ENCODE measurements at regions of chr16 and their contacts with region 1.

Region 1: DNA sequence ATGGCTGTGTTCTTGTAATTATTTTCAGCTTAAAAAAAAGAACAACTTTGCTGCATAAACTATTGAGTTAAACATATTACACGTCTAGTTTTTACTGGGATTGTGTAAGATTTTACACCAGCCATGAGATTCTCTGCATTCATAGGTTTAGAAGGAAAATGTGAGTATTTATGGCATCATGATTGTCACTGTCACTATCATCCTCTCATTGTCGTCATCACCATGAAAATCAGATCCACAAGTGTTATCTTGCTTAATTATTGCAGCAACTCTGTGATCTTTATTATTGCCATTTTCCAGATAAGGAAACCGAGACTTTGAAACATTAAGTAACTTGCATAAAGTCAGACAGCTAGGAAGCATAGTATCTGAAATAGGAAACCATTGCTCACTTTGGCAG is 459.1 kb upstream of the RBFOX1 start:
- DNase-seq: no peak
- ATAC-seq: no peak

Region 2: GRCh38 chr16:6827267-6827666 is 46.2 kb before region 1 on chr16:
- intact Hi-C with region 1: loop called in 1 of 2 experiments (anchors 10 kb)
- DNase-seq: no peak
- ATAC-seq: peak in 1 of 2 donors; percentile 31

Region 3: DNA sequence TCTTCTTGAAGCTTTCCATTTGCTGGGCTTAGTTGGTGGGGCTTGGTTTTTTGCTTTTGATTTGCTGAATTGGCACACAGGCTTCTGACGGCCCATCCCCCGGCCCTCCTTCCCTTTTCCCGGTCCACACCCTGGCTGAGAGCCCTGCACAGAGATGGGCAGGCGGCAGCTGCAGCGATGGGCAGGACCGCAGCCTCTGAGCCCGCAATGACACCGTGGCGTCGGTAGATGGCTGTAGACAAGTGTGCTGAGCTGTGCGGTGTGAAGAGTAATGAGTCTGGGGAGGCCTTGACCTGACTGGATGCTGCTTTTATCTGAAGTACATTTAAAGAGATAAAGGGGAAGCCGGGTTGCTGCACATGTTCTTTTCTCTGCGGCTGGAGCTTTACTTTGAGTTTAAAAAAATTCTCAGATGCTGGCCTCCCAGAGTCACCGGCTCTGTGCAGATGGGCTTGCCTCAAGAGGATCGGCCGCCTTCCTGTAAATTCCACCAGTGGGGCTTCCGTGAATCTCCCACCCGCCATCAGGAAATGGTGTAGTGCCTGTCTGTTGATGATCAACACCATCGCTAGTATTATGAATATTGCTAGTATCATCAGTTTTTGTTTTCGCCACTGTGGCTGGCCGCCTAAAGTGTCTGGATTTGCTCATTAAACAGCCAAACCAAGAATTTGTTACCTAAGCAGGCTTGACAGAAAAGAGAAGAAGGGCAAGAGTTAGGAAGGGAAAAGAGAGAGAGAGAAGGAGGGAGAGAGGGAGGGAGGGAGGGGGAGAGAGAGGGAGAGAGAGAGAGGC is 213.5 kb after region 1 on chr16:
- intact Hi-C with region 1: no loop called
- DNase-seq: peak; percentile 28
- ATAC-seq: peak in 1 of 2 donors; percentile 51